Caco-2 (cell line): ENCODE measurements at regions of chr12 and their contacts with region 1.

Region 1: DNA sequence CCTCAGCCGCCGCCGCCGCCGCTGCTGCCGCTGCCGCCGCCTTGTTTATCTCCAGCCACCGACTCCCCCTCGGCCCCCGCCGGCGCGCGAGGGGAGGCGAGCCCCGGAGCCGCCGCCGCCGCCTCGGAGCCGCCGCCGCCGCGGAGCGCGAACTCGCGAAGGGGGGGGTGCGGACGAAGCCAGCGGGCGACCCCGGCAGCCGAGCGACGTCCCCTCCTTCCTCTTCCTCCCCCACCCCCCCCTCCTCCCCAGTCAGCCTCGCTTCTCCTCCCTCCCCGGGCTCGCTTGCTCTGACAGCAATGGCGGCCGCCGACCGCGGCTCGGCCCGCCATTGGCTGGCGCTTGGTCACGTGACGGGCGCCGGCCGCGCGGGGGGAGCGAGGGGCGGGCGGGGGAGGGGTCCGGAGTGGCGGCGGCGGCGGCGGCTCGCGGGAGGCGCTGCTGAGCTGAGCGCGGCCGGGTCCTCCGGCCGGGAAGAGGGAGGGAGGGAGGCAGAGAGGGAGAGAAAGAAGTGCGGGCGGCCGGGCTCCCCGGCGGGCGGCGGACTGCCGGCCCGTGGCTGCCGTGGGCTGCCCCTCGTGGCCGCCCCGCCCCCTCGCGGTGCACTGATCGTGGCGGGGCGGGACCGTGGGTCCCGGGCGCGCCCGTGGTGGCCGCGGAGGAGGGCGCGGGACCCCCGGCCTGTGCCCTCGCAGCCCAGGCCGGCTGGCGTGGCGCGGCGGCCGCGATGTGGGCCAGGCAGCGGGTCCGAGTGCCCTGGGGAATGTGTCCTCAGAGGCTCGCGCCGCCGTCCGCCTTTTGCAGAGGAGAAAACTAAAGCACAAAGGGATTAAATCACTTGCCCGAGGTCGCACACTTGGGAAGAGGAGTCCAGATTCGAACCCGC is at the start of gene MED13L:
- DNase-seq: peak; percentile 86 to 92
- H3K4me3 ChIP-seq: peak within 1 kb of the TSS; percentile 81
- H3K4me3 Mint-ChIP-seq: peak within 1 kb of the TSS; percentile 83
- H3K27ac Mint-ChIP-seq: peak within 1 kb of the TSS; percentile 92
- H3K4me1 ChIP-seq: peaks cover 20% of the 10 kb centered on the region
- H3K4me1 Mint-ChIP-seq: peaks cover 30% of the 10 kb centered on the region
- H3K27me3 ChIP-seq: no peaks in the 10 kb centered on the region
- H3K27me3 Mint-ChIP-seq: no peaks in the 10 kb centered on the region
- CTCF ChIP-seq: peak in 1 of 2 experiments; percentile 18
- total RNA-seq, gene MED13L: 160 and 168 TPM in 2 replicates

Region 2: DNA sequence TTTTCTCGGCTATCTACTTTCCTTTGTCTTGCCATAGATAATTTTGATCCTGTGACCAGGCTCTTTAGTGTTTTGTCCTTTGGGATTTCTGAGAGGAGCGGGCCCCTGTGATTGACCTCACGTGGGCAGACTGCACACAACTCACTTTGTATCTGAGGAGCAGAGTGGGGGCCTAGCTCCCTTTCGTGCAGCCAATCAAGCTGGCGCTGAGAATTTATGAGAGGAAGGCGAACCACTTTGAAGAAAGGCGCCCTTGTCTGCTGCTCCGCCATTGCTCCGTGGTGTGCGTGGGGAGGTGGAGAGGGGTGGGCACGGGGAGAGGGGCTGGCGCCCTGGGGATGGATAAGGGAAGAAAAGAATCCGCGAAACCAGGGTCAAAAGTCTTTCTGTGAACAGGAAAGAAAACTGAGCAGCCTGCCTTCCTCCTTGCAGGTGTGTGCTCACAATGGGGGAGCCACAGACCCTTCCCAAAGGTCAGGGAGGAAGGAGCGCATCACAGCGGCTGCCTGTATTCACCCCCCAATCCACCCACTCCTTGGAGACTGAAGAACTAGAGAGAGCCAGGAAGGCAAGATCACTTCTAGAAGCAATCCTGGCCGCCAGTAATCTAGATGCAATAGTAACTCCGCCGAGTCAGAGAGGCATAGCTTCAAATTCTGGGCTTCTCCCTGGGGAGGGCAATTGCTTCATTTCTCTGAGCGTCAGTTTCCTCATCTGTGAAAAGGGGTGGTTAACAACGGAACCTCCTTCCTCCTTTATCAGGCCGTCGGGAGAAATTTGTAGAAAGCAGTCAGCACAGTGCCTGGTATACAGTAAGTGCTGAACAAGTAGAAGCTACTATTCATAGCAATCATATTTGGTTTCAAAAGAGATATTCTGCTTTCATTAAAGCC is 24.8 kb after region 1 on chr12:
- CTCF ChIA-PET with region 1: no interaction called
- POLR2A ChIA-PET with region 1: interaction called, 13 read pairs
- intact Hi-C with region 1: no loop called
- DNase-seq: no peak
- H3K4me3 ChIP-seq: no peak overlapping the region
- H3K4me3 Mint-ChIP-seq: no peak overlapping the region
- H3K27ac Mint-ChIP-seq: peak overlapping the region; percentile 8
- H3K4me1 ChIP-seq: peaks cover 17% of the 10 kb centered on the region; the same call in 1 of the 2 replicates
- H3K4me1 Mint-ChIP-seq: peaks cover 23% of the 10 kb centered on the region
- H3K27me3 ChIP-seq: no peaks in the 10 kb centered on the region
- H3K27me3 Mint-ChIP-seq: no peaks in the 10 kb centered on the region
- CTCF ChIP-seq: no peak

Region 3: GRCh38 chr12:116382686-116383531 is 105.3 kb after region 1 on chr12:
- CTCF ChIA-PET with region 1: interaction called, 3 read pairs
- POLR2A ChIA-PET with region 1: no interaction called
- intact Hi-C with region 1: loop called (anchors 5 kb)
- DNase-seq: no peak
- H3K4me3 ChIP-seq: no peak overlapping the region
- H3K4me3 Mint-ChIP-seq: peak overlapping the region; percentile 55
- H3K27ac Mint-ChIP-seq: peak overlapping the region; percentile 78
- H3K4me1 ChIP-seq: peaks cover 56% of the 10 kb centered on the region
- H3K4me1 Mint-ChIP-seq: peaks cover 26% of the 10 kb centered on the region
- H3K27me3 ChIP-seq: no peaks in the 10 kb centered on the region
- H3K27me3 Mint-ChIP-seq: no peaks in the 10 kb centered on the region
- CTCF ChIP-seq: no peak

Region 4: GRCh38 chr12:116599285-116600136 is 321.9 kb after region 1 on chr12:
- CTCF ChIA-PET with region 1: no interaction called
- POLR2A ChIA-PET with region 1: no interaction called
- intact Hi-C with region 1: loop called (anchors 5 kb)
- DNase-seq: peak in 1 of 2 experiments; percentile 34
- H3K4me3 ChIP-seq: no peak overlapping the region
- H3K4me3 Mint-ChIP-seq: peak overlapping the region; percentile 8
- H3K27ac Mint-ChIP-seq: peak overlapping the region; percentile 22
- H3K4me1 ChIP-seq: peaks cover 22% of the 10 kb centered on the region
- H3K4me1 Mint-ChIP-seq: peaks cover 37% of the 10 kb centered on the region
- H3K27me3 ChIP-seq: no peaks in the 10 kb centered on the region
- H3K27me3 Mint-ChIP-seq: no peaks in the 10 kb centered on the region
- CTCF ChIP-seq: peak in 1 of 2 experiments; percentile 13